ENCODE measurements at regions of chr1 and their contacts with region 1.

Region 1: DNA sequence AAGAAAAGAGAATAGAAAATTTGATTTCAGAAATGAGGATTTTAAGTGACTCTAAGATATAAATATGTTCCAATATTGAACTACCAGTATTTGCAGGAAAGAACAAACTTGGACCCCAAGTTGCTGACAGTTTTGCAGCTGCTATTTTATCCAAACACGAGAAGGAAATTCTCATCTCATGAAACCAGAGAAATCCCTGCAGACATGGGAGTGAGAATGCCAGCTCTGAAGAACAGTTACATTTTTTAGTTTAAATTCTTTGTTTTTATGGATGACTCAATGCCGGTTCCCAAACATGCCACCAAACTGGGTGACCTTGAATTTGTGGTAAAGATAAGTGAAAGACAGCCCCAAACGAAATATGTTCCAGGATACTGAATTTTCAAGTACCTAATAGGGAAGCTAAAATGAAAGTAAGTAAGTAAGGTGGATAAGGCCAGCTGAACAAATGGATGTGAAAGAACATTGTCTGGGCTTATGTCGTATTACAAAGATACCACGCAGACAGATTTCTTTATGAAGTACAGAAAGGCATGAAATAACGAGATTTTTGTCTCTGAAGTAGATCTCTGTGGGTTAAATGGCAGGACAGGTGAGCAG is 19.9 kb downstream of the TLR5 start:
- DNase-seq: no peak
- H3K4me3 ChIP-seq: no peak overlapping the region
- H3K27ac ChIP-seq: no peak overlapping the region
- H3K4me1 ChIP-seq: no peaks in the 10 kb centered on the region
- H3K27me3 ChIP-seq: no peaks in the 10 kb centered on the region
- CTCF ChIP-seq: no peak

Region 2: GRCh38 chr1:222792744-222793143 is 330.4 kb before region 1 on chr1:
- CTCF ChIA-PET with region 1: no interaction called
- POLR2A ChIA-PET with region 1: no interaction called
- intact Hi-C with region 1: loop called (anchors 2 kb)
- DNase-seq: peak; percentile 33
- H3K4me3 ChIP-seq: no peak overlapping the region
- H3K27ac ChIP-seq: no peak overlapping the region
- H3K4me1 ChIP-seq: no peaks in the 10 kb centered on the region
- H3K27me3 ChIP-seq: no peaks in the 10 kb centered on the region
- CTCF ChIP-seq: peak; percentile 65

Region 3: DNA sequence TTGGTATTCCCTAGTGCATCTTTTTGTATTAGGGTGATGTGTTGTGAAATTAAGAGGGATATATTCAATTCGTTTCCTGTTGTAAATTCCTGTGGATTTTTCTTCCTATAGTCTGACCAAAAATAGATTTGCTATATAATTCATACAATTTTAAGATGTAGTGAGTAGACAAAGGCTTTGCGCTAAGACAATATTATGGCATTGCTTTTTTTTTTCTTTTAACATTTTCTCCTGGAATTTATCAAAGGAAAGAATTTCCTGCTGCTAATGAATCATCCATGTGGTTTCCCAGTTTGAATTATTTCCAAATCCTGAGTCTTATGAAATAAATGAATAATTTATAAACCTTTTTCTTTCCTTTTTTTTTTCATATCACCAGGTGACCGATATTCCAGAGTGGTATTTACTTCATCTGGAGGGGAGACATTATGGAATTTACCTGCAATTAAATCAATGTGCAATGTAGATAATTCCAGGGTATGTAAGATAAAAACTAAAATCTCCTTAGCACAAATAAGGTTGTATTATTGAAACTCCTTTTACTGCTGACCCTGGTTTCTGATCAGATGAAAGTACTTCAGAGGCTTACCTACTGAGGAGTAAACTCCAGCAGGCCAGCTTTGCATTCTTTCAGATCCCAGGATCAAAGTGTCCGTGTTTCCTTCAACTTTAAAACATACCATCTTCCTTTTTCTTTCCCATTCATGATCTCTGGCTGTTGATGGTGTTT is 128.4 kb before region 1 on chr1:
- CTCF ChIA-PET with region 1: no interaction called
- POLR2A ChIA-PET with region 1: no interaction called
- intact Hi-C with region 1: no loop called
- DNase-seq: peak; percentile 72
- H3K4me3 ChIP-seq: no peak overlapping the region
- H3K27ac ChIP-seq: peak overlapping the region; percentile 14
- H3K4me1 ChIP-seq: peaks cover 37% of the 10 kb centered on the region
- H3K27me3 ChIP-seq: no peaks in the 10 kb centered on the region
- CTCF ChIP-seq: no peak